Lower leg skin (tissue), 4 donors: ENCODE measurements at regions of chr20 and their contacts with region 1.

Region 1: DNA sequence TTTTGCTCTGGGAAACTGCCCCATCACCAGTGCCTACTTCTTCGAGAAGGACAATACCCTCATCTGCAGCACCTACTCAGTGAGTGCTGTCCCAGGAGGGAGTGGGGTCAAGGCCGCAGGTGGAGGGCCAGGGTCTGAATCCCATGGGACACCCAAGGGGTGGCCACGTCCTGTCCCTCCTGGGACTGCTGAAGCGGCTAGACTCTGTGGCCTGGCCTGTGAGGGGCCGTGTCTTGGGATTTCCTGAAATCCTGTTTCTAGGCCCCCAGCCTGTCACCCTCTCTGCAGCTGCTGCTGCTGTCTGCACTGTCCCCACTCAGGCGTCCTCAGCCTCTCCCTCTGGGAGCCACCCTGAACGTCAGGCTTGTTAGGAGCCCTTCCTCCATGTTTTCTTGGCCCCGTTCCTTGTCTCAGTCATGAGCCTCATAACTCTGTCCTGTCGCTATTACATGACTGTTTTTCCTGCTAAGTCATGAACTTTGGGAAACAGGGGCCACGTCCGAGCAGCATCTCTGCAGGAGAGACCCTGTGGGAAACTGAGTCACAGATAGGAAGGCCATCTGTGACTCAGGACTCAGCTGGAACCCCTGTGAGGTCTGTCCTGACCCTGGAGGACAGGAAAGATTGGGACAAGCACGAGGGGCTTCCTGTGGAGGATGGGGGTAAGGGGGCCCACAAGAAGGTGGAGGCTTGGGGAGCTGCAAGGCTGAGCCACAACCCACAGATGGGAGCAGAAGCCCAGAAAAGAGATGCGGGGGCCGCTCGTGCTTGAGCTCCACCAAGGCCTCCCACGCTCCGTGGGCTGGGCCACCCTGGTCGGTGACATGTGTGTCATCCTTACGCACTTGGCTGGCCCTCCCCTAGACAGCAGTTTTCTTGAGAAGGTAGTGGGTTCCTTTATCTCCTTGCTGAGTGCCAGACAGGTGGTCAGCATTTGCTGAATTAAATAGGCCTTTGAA is 49.9 kb downstream of the EFCAB8 start:
- DNase-seq: no peak
- H3K4me3 ChIP-seq: no peak overlapping the region
- CTCF ChIP-seq: no peak
- POLR2A ChIP-seq: no peak

Region 2: DNA sequence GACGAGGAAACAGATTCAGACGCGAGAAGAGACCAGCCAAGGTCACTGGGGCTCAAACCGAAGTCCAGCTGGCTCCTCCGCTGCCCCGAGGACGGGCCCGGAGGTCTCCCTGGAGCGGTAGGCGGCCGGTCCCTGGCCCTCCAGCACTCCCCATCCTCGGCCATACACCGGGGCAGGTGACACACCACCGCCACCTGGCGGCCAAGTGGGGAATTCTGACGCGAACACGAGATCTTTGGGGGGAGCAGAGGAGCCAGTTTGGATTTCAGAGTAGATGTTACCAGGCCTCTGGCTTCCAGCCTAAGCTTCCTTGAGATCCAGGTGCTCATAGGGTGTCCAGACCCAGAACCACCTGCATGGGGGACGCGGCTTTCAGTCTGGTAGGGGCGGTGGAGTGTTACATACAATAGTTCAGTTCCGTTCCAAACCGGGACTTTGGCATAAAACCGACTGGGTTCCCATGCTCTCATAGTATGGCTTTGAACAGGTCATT is 390.5 kb after region 1 on chr20:
- intact Hi-C with region 1: loop called (anchors 5 kb)
- DNase-seq: peak; percentile 34 to 91
- H3K4me3 ChIP-seq: no peak overlapping the region
- CTCF ChIP-seq: no peak
- POLR2A ChIP-seq: no peak